T-cell (primary cell): ENCODE measurements at regions of chr11 and their contacts with region 1.

Region 1: DNA sequence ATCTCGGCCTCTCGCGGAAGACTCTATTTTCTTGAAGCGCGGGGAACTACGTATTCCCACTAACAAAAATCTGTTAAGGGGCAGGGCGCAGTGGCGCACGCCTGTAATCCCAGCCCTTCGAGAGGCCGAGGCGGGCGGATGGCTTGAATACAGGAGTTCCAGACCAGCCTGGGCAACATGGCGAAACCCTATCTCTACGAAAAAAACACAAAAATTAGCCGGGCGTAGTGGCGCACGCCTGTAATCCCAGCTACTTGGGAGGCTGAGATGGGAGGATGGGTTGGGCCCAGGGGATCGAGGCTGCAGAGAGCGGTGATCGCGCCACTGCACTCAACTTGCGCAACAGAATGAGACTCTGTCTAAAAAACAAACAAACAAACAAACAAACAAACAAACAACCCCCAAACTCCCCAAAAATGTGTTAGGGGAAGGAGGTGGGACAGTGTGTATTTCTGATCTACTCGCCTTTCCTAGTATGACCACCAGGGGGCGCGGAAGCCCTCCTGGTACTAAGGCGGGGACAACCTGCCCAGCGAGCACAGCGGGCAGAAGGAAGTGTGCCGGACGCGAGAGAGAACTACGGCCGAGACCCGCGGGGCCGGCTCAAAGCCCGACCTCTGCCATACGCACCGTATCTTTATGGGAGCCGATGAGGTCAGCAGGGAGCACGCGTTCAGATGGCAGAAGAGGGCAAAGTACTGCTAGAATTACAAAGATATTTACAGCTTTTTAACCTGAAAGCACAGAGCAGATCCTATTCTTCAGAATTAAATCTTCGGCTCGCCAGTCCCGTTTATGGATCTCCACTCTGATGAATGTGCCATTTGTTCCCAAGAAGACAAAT is 1.3 kb upstream of the STX3 start:
- DNase-seq: peak; percentile 51 to 89 (median 73)
- ATAC-seq: peak; percentile 56 to 63 (median 62)
- H3K4me3 ChIP-seq: peak overlapping the region; percentile 62 to 96
- H3K4me3 Mint-ChIP-seq: peak overlapping the region; percentile 83 to 95 (median 89)
- H3K27ac ChIP-seq: no peak overlapping the region
- H3K27ac Mint-ChIP-seq: peak overlapping the region; percentile 23 to 55
- H3K4me1 ChIP-seq: peaks cover 6 to 24% of the 10 kb centered on the region in 2 experiments
- H3K4me1 Mint-ChIP-seq: peaks cover 28 to 34% (median 29%) of the 10 kb centered on the region in 3 donors
- H3K27me3 ChIP-seq: peaks cover 0 to 9% of the 10 kb centered on the region in 2 experiments
- H3K27me3 Mint-ChIP-seq: peaks cover 9 to 11% of the 10 kb centered on the region in 2 donors

Region 2: GRCh38 chr11:59767225-59767611 is 13.3 kb after region 1 on chr11:
- CTCF ChIA-PET with region 1: interaction called in 1 of 2 experiments, 18 read pairs
- POLR2A ChIA-PET with region 1: no interaction called
- DNase-seq: peak in 11 of 35 experiments; percentile 2 to 41 (median 14)
- ATAC-seq: peak; percentile 64 to 84 (median 80)
- H3K4me3 ChIP-seq: no peak overlapping the region
- H3K4me3 Mint-ChIP-seq: no peak overlapping the region
- H3K27ac ChIP-seq: no peak overlapping the region
- H3K27ac Mint-ChIP-seq: peak overlapping the region; percentile 35 to 64
- H3K4me1 ChIP-seq: peaks cover 32 to 44% of the 10 kb centered on the region in 2 experiments
- H3K4me1 Mint-ChIP-seq: peaks cover 10 to 26% (median 23%) of the 10 kb centered on the region in 3 donors
- H3K27me3 ChIP-seq: no peaks in the 10 kb centered on the region
- H3K27me3 Mint-ChIP-seq: no peaks in the 10 kb centered on the region

Region 3: GRCh38 chr11:59802639-59803176 is 48.8 kb after region 1 on chr11:
- CTCF ChIA-PET with region 1: interaction called, 22 to 28 read pairs
- POLR2A ChIA-PET with region 1: interaction called in 1 of 2 experiments, 6 read pairs
- DNase-seq: peak in 23 of 35 experiments; percentile 5 to 81 (median 26)
- ATAC-seq: peak; percentile 66 to 83 (median 73)
- H3K4me3 ChIP-seq: no peak overlapping the region
- H3K4me3 Mint-ChIP-seq: no peak overlapping the region
- H3K27ac ChIP-seq: no peak overlapping the region
- H3K27ac Mint-ChIP-seq: no peak overlapping the region
- H3K4me1 ChIP-seq: no peaks in the 10 kb centered on the region
- H3K4me1 Mint-ChIP-seq: peaks cover 0 to 7% (median 0%) of the 10 kb centered on the region in 3 donors
- H3K27me3 ChIP-seq: no peaks in the 10 kb centered on the region
- H3K27me3 Mint-ChIP-seq: no peaks in the 10 kb centered on the region

Region 4: GRCh38 chr11:59810189-59810910 is 56.5 kb after region 1 on chr11 and contains the start of gene MRPL16:
- CTCF ChIA-PET with region 1: interaction called, 4 to 16 read pairs
- POLR2A ChIA-PET with region 1: no interaction called
- DNase-seq: peak; percentile 78 to 94 (median 86)
- ATAC-seq: peak; percentile 99
- H3K4me3 ChIP-seq: peak within 1 kb of the TSS; percentile 73 to 91
- H3K4me3 Mint-ChIP-seq: peak within 1 kb of the TSS; percentile 89 to 92 (median 89)
- H3K27ac ChIP-seq: peak within 1 kb of the TSS; percentile 63
- H3K27ac Mint-ChIP-seq: peak within 1 kb of the TSS; percentile 78 to 91
- H3K4me1 ChIP-seq: peaks cover 6 to 16% of the 10 kb centered on the region in 2 experiments
- H3K4me1 Mint-ChIP-seq: peaks cover 24 to 29% (median 24%) of the 10 kb centered on the region in 3 donors
- H3K27me3 ChIP-seq: no peaks in the 10 kb centered on the region
- H3K27me3 Mint-ChIP-seq: no peaks in the 10 kb centered on the region
- total RNA-seq, gene MRPL16: 24.0 to 46.3 (median 39.7) TPM